Ovary (tissue), 10 donors: ENCODE measurements at regions of chr2 and their contacts with region 1.

Region 1: GRCh38 chr2:238596571-238597551 is 170.1 kb downstream of the ASB1 start:
- DNase-seq: peak; percentile 46 to 81 (median 60)
- H3K4me3 ChIP-seq: no peak overlapping the region
- H3K27ac ChIP-seq: no peak overlapping the region
- H3K4me1 ChIP-seq: peaks cover 8% of the 10 kb centered on the region
- H3K27me3 ChIP-seq: no peaks in the 10 kb centered on the region
- CTCF ChIP-seq: no peak
- EP300 ChIP-seq: no peak
- POLR2A ChIP-seq: no peak

Region 2: DNA sequence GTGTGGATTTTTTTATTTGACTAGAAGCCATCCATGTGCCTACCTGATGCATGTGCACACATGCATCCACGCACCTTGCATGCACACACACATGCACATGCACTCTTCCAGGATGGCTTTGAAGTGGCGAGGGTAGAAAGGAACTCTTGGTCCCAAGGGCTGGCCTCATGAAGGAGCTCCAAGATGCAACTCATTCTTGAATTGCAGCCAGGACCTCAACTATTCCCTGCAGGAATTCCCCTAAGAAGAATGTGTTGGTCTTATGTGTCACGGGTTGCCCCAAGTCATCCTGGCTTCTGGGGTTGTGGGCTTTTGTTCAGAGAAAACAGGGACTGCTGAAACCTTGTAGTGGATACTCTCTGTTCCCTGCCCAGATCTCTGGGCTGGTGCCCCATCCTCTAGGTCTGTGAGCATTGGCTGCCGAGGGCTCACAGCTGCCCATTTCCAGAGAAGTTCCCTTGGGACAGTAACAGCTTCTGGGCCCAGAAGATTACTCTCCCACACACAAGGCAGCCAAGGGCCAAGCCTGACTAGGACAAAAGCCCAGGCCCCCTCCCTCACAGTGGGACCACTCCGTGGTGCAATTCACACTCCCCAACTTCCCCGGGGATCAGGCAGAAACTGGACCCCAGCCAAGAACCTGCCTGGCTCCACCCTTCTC is 1373.5 kb before region 1 on chr2:
- intact Hi-C with region 1: no loop called
- DNase-seq: peak; percentile 47 to 74 (median 55)
- H3K4me3 ChIP-seq: no peak overlapping the region
- H3K27ac ChIP-seq: no peak overlapping the region
- H3K4me1 ChIP-seq: peaks cover 15% of the 10 kb centered on the region
- H3K27me3 ChIP-seq: no peaks in the 10 kb centered on the region
- CTCF ChIP-seq: no peak
- EP300 ChIP-seq: no peak
- POLR2A ChIP-seq: no peak

Region 3: DNA sequence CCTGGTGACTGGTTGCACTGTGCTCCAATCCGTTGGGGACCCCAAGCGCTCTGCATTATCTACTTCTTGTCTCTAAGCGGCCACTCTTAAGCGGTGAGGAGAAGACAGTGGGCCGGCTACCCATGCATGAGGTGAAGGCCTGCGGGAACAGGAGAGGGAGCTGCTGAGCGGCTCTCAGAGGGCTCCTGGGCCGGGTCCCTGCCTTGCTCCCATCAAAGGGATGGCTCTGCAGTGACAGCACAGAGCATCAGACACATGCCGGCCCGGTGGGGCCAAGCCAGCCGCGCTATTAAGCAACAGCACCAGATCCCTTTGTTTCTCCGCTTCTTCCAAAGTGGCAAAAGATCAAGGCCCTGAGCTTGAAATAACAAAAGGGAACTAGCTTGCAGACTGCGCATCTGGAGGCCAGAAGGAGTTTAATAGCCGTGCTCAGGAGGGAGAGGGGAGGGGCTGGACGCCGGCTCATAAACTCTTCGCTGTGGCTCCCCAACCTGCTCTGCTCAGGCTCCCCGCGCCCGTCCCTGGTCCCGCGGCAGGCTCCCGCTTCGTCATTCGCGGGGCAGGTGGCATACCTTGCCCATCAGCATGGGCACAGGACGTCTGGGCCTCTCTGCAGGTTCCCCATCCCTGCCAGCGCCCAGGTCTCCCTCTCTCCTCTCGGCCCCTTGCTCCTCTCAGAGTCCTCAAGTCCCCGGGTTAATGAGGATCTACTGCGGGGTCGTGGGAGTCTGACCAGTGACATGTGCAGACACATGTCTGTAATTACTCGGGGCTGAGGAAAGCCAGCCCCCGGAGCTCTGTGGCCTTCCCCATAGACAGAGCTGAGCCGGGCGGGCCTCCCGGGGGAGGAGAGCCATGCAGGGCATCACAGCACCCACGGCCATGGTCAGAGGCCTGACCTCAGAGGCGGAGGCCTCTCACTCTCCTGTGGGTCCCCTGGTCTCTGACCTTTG is 73.4 kb before region 1 on chr2:
- intact Hi-C with region 1: loop called in 1 of 4 experiments (anchors 5 kb)
- DNase-seq: peak; percentile 59 to 85 (median 65)
- H3K4me3 ChIP-seq: no peak overlapping the region
- H3K27ac ChIP-seq: no peak overlapping the region
- H3K4me1 ChIP-seq: peaks cover 8% of the 10 kb centered on the region
- H3K27me3 ChIP-seq: no peaks in the 10 kb centered on the region
- CTCF ChIP-seq: peak in 1 of 3 donors; percentile 47
- EP300 ChIP-seq: no peak
- POLR2A ChIP-seq: no peak

Region 4: DNA sequence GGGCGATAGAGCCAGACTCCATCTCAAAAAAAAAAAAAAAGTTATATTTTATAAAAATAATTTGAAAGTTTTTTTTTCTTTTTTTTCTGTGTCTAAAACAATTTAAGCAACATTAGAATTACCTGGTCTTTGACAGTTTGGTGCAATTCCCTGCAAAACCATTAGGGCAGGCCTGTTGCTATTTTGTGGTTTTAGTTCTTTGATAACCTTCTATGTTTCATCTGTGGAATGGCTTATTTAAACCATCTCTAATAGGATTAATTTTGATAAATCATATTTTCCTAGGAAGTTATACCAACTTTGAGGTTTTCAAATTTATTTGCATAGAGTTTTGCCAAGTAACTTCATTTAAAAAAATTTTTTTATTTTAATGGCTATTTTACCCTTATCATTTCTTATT is 109.8 kb after region 1 on chr2:
- intact Hi-C with region 1: loop called in 1 of 4 experiments (anchors 10 kb)
- DNase-seq: no peak
- H3K4me3 ChIP-seq: no peak overlapping the region
- H3K27ac ChIP-seq: no peak overlapping the region
- H3K4me1 ChIP-seq: no peaks in the 10 kb centered on the region
- H3K27me3 ChIP-seq: no peaks in the 10 kb centered on the region
- CTCF ChIP-seq: no peak
- EP300 ChIP-seq: no peak
- POLR2A ChIP-seq: no peak

Region 5: DNA sequence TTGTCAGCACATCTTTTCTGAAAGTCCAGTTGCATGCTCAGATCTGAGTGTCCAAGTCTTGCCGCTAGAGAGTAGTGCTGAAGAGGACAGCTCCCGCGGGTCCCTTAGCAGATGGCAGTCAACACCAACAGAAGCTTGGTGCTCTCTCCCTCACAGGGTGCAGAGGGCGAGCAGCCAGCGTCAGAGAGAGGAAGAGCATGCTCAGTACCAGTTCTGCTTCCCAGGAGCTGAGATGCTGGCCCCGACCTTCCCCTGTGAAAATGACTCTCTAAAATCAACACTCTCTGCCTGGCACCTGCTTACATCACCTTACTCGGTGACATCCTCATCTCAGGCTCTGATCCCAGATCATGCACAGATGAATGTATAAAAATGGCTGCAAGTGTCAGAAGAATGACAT is 165.0 kb after region 1 on chr2:
- intact Hi-C with region 1: no loop called
- DNase-seq: no peak
- H3K4me3 ChIP-seq: no peak overlapping the region
- H3K27ac ChIP-seq: no peak overlapping the region
- H3K4me1 ChIP-seq: no peaks in the 10 kb centered on the region
- H3K27me3 ChIP-seq: no peaks in the 10 kb centered on the region
- CTCF ChIP-seq: no peak
- EP300 ChIP-seq: no peak
- POLR2A ChIP-seq: no peak